ENCODE measurements at regions of chr1 and their contacts with region 1.

Region 1: GRCh38 chr1:66331657-66332547 is 202.1 kb upstream of the SGIP1 start:
- DNase-seq: peak in 8 of 9 experiments; percentile 18 to 74 (median 54)
- ATAC-seq: peak; percentile 12
- H3K4me3 ChIP-seq: peak overlapping the region; percentile 73 to 79
- H3K4me3 Mint-ChIP-seq: peak overlapping the region; percentile 99
- H3K27ac ChIP-seq: peak overlapping the region; percentile 86
- H3K27ac Mint-ChIP-seq: peak overlapping the region; percentile 98
- H3K4me1 ChIP-seq: peaks cover 42% of the 10 kb centered on the region
- H3K4me1 Mint-ChIP-seq: peaks cover 70% of the 10 kb centered on the region
- H3K27me3 ChIP-seq: no peaks in the 10 kb centered on the region
- H3K27me3 Mint-ChIP-seq: no peaks in the 10 kb centered on the region
- CTCF ChIP-seq: no peak

Region 2: DNA sequence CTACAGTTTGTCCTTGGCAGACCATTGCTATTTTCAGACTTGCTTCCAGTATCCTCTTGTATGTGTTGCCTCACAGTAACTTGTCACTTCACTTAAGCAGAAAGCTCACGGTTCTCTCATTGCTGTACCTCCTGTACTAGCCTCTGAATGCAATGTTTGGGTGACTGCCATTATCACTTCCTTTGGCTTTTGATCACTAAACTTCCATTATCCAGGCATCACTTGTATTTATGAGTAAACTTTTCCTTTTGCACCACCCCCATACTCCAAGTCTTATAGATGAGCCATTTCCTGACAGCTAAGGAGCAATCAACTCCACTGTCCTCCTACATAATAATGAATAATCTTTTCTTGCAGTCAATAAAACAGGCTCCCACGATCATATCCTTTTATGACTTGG is 283.9 kb before region 1 on chr1:
- CTCF ChIA-PET with region 1: no interaction called
- POLR2A ChIA-PET with region 1: no interaction called
- intact Hi-C with region 1: no loop called
- DNase-seq: no peak
- ATAC-seq: no peak
- H3K4me3 ChIP-seq: no peak overlapping the region
- H3K4me3 Mint-ChIP-seq: no peak overlapping the region
- H3K27ac ChIP-seq: no peak overlapping the region
- H3K27ac Mint-ChIP-seq: no peak overlapping the region
- H3K4me1 ChIP-seq: no peaks in the 10 kb centered on the region
- H3K4me1 Mint-ChIP-seq: no peaks in the 10 kb centered on the region
- H3K27me3 ChIP-seq: no peaks in the 10 kb centered on the region
- H3K27me3 Mint-ChIP-seq: peaks cover 7% of the 10 kb centered on the region
- CTCF ChIP-seq: no peak

Region 3: GRCh38 chr1:66253330-66253921 is 78.5 kb before region 1 on chr1:
- CTCF ChIA-PET with region 1: interaction called, 12 read pairs
- POLR2A ChIA-PET with region 1: interaction called, 4 read pairs
- intact Hi-C with region 1: no loop called
- DNase-seq: peak in 3 of 9 experiments; percentile 19 to 74 (median 61)
- ATAC-seq: peak; percentile 86
- H3K4me3 ChIP-seq: no peak overlapping the region
- H3K4me3 Mint-ChIP-seq: no peak overlapping the region
- H3K27ac ChIP-seq: no peak overlapping the region
- H3K27ac Mint-ChIP-seq: no peak overlapping the region
- H3K4me1 ChIP-seq: peaks cover 5% of the 10 kb centered on the region
- H3K4me1 Mint-ChIP-seq: peaks cover 13% of the 10 kb centered on the region
- H3K27me3 ChIP-seq: no peaks in the 10 kb centered on the region
- H3K27me3 Mint-ChIP-seq: no peaks in the 10 kb centered on the region
- CTCF ChIP-seq: peak; percentile 84

Region 4: DNA sequence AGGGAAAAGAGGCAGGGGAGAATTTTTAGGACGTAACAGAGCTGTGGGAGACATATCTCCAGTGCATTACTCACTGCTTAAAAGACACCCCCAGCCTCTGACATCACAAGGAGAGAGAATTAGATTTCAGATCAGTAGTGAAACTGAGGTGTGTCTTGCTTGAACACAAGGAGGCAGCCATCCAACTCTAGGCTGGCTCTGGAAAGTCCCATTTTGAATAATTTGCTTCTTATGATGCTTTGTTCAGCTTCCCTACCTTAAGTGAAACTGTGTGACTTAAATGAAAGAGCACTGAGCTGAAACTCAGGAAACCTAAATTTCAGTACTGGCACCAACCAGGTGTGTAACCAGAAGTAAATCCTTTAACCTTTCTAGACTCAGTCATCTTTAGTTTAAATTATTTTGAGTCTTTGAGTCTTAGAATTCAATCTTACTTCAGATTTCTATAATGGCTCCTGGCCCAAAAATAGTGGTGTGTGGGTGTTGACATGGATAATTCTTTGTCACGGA is 49.5 kb before region 1 on chr1:
- CTCF ChIA-PET with region 1: interaction called, 8 read pairs
- POLR2A ChIA-PET with region 1: interaction called, 6 read pairs
- intact Hi-C with region 1: loop called in 1 of 2 experiments (anchors 2 kb)
- DNase-seq: peak in 7 of 9 experiments; percentile 16 to 89 (median 54)
- ATAC-seq: peak; percentile 93
- H3K4me3 ChIP-seq: no peak overlapping the region
- H3K4me3 Mint-ChIP-seq: no peak overlapping the region
- H3K27ac ChIP-seq: peak overlapping the region in 1 of 2 experiments; percentile 13
- H3K27ac Mint-ChIP-seq: peak overlapping the region; percentile 84
- H3K4me1 ChIP-seq: peaks cover 55% of the 10 kb centered on the region
- H3K4me1 Mint-ChIP-seq: peaks cover 89% of the 10 kb centered on the region
- H3K27me3 ChIP-seq: no peaks in the 10 kb centered on the region
- H3K27me3 Mint-ChIP-seq: no peaks in the 10 kb centered on the region
- CTCF ChIP-seq: peak; percentile 35

Region 5: DNA sequence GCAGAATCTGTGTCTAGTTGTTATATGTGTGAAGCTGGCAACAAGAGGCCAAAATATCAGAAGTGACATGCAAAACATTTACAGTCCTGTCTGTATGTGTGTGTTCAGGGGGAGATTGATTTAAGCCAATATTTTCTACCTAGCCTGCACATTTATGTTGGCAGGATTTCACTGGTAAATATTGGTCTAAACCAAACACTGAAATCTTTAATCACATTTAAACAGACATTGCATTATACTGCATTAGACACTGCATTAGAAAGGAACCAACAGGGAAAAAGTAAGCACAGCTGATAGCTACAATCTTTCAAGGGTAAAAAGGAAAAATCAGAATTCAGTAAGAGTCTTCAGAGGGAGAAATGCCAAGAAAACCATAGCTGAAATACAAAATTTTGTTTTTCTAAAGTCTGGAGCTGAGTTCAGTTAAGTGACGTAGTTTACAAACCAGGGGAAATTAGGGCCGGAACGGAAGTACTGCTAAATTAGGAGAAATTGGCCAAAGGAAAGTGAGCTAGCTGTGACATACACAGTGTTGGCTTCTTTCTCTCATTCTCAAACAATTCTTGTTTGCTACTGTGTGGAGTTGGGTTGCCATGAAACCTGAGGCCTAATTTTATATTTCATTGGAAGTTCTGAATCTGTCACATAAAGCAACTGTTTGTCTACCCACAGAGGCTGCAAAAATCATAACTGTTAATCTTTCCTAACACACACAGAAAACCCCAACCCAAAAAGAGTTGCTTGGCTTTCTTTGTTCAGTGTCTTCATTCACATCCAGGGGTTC is 15.2 kb before region 1 on chr1:
- CTCF ChIA-PET with region 1: no interaction called
- POLR2A ChIA-PET with region 1: interaction called, 3 read pairs
- intact Hi-C with region 1: loop called in 1 of 2 experiments (anchors 1 kb)
- DNase-seq: peak in 1 of 9 experiments; percentile 44
- ATAC-seq: peak; percentile 48
- H3K4me3 ChIP-seq: no peak overlapping the region
- H3K4me3 Mint-ChIP-seq: no peak overlapping the region
- H3K27ac ChIP-seq: no peak overlapping the region
- H3K27ac Mint-ChIP-seq: peak overlapping the region; percentile 29
- H3K4me1 ChIP-seq: no peaks in the 10 kb centered on the region
- H3K4me1 Mint-ChIP-seq: peaks cover 13% of the 10 kb centered on the region
- H3K27me3 ChIP-seq: no peaks in the 10 kb centered on the region
- H3K27me3 Mint-ChIP-seq: no peaks in the 10 kb centered on the region
- CTCF ChIP-seq: no peak

Region 6: GRCh38 chr1:66360285-66360724 is 28.4 kb after region 1 on chr1:
- CTCF ChIA-PET with region 1: interaction called, 5 read pairs
- POLR2A ChIA-PET with region 1: no interaction called
- intact Hi-C with region 1: loop called in 1 of 2 experiments (anchors 5 kb)
- DNase-seq: no peak
- ATAC-seq: no peak
- H3K4me3 ChIP-seq: no peak overlapping the region
- H3K4me3 Mint-ChIP-seq: no peak overlapping the region
- H3K27ac ChIP-seq: no peak overlapping the region
- H3K27ac Mint-ChIP-seq: no peak overlapping the region
- H3K4me1 ChIP-seq: peaks cover 37% of the 10 kb centered on the region
- H3K4me1 Mint-ChIP-seq: peaks cover 63% of the 10 kb centered on the region
- H3K27me3 ChIP-seq: no peaks in the 10 kb centered on the region
- H3K27me3 Mint-ChIP-seq: no peaks in the 10 kb centered on the region
- CTCF ChIP-seq: peak; percentile 21

Region 7: GRCh38 chr1:66929999-66930822 is 598.3 kb after region 1 on chr1:
- CTCF ChIA-PET with region 1: no interaction called
- POLR2A ChIA-PET with region 1: no interaction called
- intact Hi-C with region 1: loop called in 1 of 2 experiments (anchors 5 kb)
- DNase-seq: peak; percentile 88 to 97 (median 95)
- ATAC-seq: peak; percentile 70
- H3K4me3 ChIP-seq: peak overlapping the region; percentile 86 to 90
- H3K4me3 Mint-ChIP-seq: peak overlapping the region; percentile 86
- H3K27ac ChIP-seq: peak overlapping the region; percentile 87 to 90
- H3K27ac Mint-ChIP-seq: peak overlapping the region; percentile 94
- H3K4me1 ChIP-seq: peaks cover 40% of the 10 kb centered on the region
- H3K4me1 Mint-ChIP-seq: peaks cover 61% of the 10 kb centered on the region
- H3K27me3 ChIP-seq: no peaks in the 10 kb centered on the region
- H3K27me3 Mint-ChIP-seq: no peaks in the 10 kb centered on the region
- CTCF ChIP-seq: peak; percentile 17

Measured in CD8-positive, alpha-beta T cell (primary cell).